ENCODE measurements at regions of chr1 and their contacts with region 1.

Region 1: DNA sequence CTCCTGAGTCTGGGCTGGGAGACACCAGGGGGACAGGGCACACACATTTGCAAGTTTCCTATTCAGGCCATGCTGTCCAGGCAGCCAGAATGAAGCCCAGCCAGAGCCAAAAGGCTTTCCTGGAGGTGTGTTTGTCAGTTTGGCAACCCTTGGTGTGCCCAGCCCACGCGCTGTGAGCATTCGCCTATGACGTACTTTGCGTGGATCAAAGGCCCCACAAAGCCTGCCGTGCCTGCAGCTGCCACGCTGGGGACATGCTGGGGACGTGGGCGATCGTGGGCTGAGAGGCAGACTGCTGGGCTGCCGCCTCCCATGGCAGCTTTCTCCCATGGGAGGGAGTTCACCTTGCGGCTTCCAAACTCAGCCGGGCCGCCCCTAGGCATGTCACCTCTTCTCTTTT is 57.5 kb downstream of the CD247 start:
- DNase-seq: no peak
- H3K4me3 ChIP-seq: no peak overlapping the region
- H3K27ac ChIP-seq: no peak overlapping the region
- H3K4me1 ChIP-seq: no peaks in the 10 kb centered on the region
- H3K27me3 ChIP-seq: no peaks in the 10 kb centered on the region
- CTCF ChIP-seq: no peak

Region 2: DNA sequence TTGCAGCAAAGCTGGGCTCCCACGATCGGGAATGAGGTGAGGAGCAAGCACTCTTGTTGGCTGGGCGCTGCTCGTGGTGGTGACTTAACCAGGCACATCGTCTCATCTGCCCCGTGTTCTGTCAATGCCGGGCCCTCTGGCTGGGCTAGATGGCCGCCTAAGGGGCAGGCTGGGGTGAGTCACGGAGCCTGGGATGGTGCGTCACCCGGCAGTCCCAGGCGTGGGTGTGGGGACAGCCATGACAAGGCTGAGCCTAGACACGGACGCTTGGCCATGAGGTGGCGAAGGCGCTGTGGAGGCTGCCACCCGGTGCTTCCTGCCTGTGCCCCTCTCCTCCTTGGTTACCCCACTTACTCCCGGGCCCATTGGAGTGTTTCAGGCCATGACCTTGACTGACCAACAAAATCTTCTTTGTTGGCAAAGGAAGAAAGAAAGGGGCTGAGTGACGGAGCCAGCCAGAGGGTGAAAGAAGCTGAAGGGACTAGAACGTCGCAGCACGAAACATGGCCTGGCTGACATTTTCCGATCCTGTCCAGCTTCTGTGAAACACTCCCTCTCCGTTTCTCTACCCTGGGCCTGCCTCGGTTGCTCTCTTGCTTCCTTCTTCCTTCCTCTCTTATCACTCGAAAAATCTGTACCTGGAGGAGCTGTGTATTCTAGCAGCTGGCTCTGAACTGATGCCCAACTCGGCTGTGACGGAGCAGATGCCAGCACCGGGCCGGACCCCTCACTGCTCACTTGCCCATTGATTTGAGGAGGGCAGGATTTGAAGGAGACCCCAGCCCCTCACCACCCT is 56.9 kb after region 1 on chr1:
- CTCF ChIA-PET with region 1: no interaction called
- dilution Hi-C with region 1: loop called (anchors 5 kb)
- in situ Hi-C with region 1: no loop called
- intact Hi-C with region 1: no loop called
- DNase-seq: no peak
- H3K4me3 ChIP-seq: no peak overlapping the region
- H3K27ac ChIP-seq: no peak overlapping the region
- H3K4me1 ChIP-seq: no peaks in the 10 kb centered on the region
- H3K27me3 ChIP-seq: peaks cover 4% of the 10 kb centered on the region
- CTCF ChIP-seq: no peak